PC-9 (cell line): ENCODE measurements at regions of chr3 and their contacts with region 1.

Region 1: DNA sequence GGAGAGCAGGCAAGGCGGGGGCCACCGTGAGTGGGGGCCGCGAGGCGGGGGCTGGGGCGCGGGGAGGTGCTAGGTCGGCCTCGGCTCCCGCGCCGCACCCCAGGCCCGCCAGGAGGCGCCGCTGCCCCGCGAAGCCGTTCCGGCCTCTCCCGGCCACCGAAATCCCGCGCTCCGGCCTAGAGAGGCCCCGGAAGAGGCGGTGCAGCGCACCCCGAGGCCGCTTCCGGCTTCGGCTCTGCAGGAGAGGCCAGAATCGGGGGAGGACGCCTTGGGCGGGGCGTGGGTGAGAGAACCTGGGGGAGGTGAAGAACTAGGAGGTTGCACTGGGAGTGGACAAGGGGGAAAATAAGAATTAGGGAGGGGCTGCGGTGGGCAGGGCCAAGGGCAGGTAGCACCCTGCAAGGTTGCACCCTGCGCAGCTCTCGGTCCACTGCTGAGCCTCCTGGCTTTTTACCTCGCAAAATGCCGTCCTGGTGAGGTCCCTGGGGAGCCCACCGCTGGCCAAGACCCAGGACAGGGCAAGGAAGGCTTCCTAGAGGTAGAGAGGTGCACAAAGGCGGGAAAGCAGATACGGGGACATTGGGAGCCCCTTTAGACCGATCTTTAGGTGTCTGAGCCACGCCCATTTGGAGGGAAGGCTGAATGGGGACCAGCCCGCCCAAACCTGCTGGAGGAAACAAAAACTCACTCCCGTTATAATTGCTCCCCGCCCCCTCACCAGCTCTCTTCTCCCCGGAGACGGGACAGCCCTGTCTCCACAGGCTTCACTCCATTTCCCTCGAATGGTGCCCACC is 8.4 kb upstream of the GNAI2 start:
- DNase-seq: peak; percentile 93 to 98
- H3K4me3 ChIP-seq: peak overlapping the region; percentile 64
- H3K27ac ChIP-seq: peak overlapping the region; percentile 34; the same call in 1 of the 2 replicates
- H3K4me1 ChIP-seq: peaks cover 12% of the 10 kb centered on the region
- H3K27me3 ChIP-seq: no peaks in the 10 kb centered on the region
- CTCF ChIP-seq: peak; percentile 66

Region 2: DNA sequence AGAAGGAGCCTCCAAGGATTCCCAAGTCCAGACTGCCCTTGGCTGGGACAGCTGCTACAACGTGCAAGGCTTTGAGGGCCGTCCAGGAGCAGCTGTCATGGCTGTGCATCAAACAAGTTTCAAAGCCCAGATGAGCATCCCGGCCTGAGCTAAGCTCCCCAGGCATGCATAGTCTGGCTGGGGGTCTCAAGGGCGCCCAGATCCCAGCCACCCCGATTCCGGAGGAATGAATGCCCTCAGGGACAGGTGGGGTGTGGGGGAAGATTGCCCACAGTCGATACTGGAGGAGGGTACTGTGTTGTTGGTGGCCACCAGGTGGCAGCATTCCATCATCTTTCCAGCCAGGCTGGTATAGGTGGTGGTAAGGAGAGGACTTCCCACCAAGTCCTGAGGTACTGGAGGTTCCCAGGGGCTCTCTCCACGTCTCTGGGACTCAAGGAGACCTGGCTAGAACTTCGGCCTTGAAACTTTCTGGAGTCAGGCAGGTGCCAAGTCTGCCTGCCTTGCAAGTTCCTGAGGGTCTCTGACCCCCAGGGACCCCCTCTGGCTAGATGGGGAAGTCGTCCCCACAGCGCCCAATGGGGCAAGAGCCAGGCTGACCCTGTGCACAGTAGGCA is 106.1 kb before region 1 on chr3:
- CTCF ChIA-PET with region 1: interaction called, 4 read pairs
- POLR2A ChIA-PET with region 1: no interaction called
- intact Hi-C with region 1: loop called (anchors 1 kb)
- DNase-seq: peak; percentile 63 to 76
- H3K4me3 ChIP-seq: no peak overlapping the region
- H3K27ac ChIP-seq: no peak overlapping the region
- H3K4me1 ChIP-seq: 0 out of 2 replicates have a peak, but pooled peaks cover 4% of the 10 kb centered on the region
- H3K27me3 ChIP-seq: no peaks in the 10 kb centered on the region
- CTCF ChIP-seq: peak; percentile 87

Region 3: GRCh38 chr3:50192689-50193141 is 34.9 kb before region 1 on chr3:
- CTCF ChIA-PET with region 1: interaction called, 13 read pairs
- POLR2A ChIA-PET with region 1: interaction called, 10 read pairs
- intact Hi-C with region 1: loop called (anchors 1 kb)
- DNase-seq: peak; percentile 47 to 78
- H3K4me3 ChIP-seq: no peak overlapping the region
- H3K27ac ChIP-seq: no peak overlapping the region
- H3K4me1 ChIP-seq: 0 out of 2 replicates have a peak, but pooled peaks cover 7% of the 10 kb centered on the region
- H3K27me3 ChIP-seq: no peaks in the 10 kb centered on the region
- CTCF ChIP-seq: peak; percentile 91

Region 4: GRCh38 chr3:50260027-50260941 is 32.7 kb after region 1 on chr3:
- CTCF ChIA-PET with region 1: interaction called, 9 read pairs
- POLR2A ChIA-PET with region 1: interaction called, 7 read pairs
- intact Hi-C with region 1: loop called (anchors 1 kb)
- DNase-seq: peak; percentile 73 to 94
- H3K4me3 ChIP-seq: peak overlapping the region; percentile 60
- H3K27ac ChIP-seq: no peak overlapping the region
- H3K4me1 ChIP-seq: peaks cover 19% of the 10 kb centered on the region
- H3K27me3 ChIP-seq: no peaks in the 10 kb centered on the region
- CTCF ChIP-seq: peak; percentile 82

Region 5: GRCh38 chr3:50321336-50322114 is 93.9 kb after region 1 on chr3:
- CTCF ChIA-PET with region 1: interaction called, 4 read pairs
- POLR2A ChIA-PET with region 1: no interaction called
- intact Hi-C with region 1: loop called (anchors 1 kb)
- DNase-seq: peak; percentile 69 to 89
- H3K4me3 ChIP-seq: peak overlapping the region; percentile 69
- H3K27ac ChIP-seq: peak overlapping the region; percentile 83
- H3K4me1 ChIP-seq: peaks cover 31% of the 10 kb centered on the region
- H3K27me3 ChIP-seq: no peaks in the 10 kb centered on the region
- CTCF ChIP-seq: peak; percentile 62